ENCODE measurements at regions of chr7 and their contacts with region 1.

Region 1: DNA sequence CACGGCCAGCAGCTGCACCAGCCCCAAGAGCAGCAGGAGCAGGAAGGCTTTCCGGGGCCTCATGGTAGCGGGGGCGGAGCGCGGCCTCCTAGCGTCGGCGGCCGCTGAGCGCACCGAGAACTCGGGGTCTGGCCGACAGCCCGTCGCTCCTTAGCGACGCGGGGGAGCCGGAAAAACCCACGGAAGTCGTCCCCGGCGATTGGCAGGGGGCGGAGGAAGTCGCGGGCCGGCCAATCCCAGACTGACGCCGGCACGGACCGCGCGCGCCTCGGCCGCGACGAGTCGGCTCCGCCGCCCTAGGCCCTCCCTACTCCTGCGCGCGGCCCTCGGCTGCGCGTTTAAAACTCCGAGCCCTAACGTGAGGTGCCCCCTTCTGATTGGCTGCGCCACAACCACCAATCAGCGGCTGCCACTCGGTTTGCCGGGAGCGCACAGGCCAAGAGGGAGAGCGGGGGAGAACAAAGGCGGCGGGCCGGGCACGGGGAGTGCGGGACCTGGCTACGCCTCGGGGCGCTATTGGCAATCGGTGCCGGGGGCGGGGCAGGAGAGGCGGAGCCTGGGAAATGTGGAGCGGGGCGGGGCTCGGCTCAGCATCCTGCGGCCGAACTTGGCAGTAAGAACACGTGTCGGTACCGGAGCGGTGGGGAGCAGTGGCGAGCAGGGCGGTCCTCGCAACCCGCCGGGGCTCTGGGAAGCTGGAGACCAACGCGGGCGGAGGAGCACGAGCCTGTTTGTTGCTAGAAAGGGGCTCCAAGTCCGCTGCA is at the start of gene PDIA4:
- DNase-seq: peak; percentile 99
- H3K4me3 ChIP-seq: peak within 1 kb of the TSS; percentile 59 to 86
- H3K4me3 Mint-ChIP-seq: peak within 1 kb of the TSS; percentile 88 to 95 (median 92)
- H3K27ac ChIP-seq: peak within 1 kb of the TSS; percentile 88
- H3K27ac Mint-ChIP-seq: peak within 1 kb of the TSS; percentile 90 to 98 (median 94)
- H3K4me1 ChIP-seq: peaks cover 40% of the 10 kb centered on the region
- H3K4me1 Mint-ChIP-seq: peaks cover 29 to 58% (median 45%) of the 10 kb centered on the region in 4 donors
- H3K27me3 ChIP-seq: no peaks in the 10 kb centered on the region
- H3K27me3 Mint-ChIP-seq: no peaks in the 10 kb centered on the region
- total RNA-seq, gene PDIA4: 82.8 to 87.1 TPM

Region 2: GRCh38 chr7:148650232-148650858 is 378.2 kb before region 1 on chr7:
- CTCF ChIA-PET with region 1: no interaction called
- POLR2A ChIA-PET with region 1: no interaction called
- intact Hi-C with region 1: no loop called
- DNase-seq: no peak
- H3K4me3 ChIP-seq: no peak overlapping the region
- H3K4me3 Mint-ChIP-seq: no peak overlapping the region
- H3K27ac ChIP-seq: no peak overlapping the region
- H3K27ac Mint-ChIP-seq: no peak overlapping the region
- H3K4me1 ChIP-seq: no peaks in the 10 kb centered on the region
- H3K4me1 Mint-ChIP-seq: no peaks in the 10 kb centered on the region
- H3K27me3 ChIP-seq: no peaks in the 10 kb centered on the region
- H3K27me3 Mint-ChIP-seq: peaks cover 0 to 1% of the 10 kb centered on the region in 2 donors

Region 3: DNA sequence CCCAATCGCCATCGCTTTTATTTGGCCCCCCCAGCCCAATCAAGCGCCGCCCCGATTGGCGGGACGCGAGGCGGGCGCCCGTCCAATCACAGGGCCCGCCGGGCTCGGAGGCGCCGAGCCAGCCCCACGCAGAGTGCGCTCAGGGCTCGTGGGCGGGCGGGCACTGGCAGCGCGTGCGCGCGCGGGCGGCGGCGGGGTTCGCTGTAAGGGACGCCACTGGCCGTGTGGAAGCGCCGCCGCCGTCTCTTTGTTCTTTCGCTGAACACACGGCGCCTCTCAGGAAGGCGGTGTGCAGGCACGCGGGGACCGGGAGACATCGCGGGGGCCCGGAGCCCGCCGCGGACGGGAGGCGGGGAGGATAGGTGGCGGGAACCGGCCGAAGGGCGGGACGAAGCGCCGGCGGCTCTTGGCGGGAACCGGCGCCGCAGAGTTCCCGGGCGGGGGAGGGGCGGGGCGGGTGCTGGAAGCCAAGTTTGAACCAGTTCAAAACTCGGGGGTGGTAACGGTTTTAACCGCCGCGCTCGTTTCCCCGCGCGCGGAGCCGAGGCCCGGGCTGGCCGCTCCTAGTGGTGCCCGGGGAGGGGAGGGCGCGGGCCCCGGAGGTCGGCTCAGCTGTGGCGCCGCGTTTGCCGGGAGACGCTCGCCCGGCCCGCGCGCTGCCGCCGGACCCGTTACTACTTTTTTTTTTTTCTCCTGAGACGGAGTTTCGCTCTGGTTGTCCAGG is 144.1 kb before region 1 on chr7:
- CTCF ChIA-PET with region 1: no interaction called
- POLR2A ChIA-PET with region 1: no interaction called
- intact Hi-C with region 1: loop called (anchors 1 kb)
- DNase-seq: peak; percentile 91 to 96 (median 94)
- H3K4me3 ChIP-seq: peak overlapping the region in 1 of 2 donors; percentile 84
- H3K4me3 Mint-ChIP-seq: peak overlapping the region; percentile 90 to 97 (median 94)
- H3K27ac ChIP-seq: peak overlapping the region; percentile 79
- H3K27ac Mint-ChIP-seq: peak overlapping the region; percentile 89 to 96 (median 92)
- H3K4me1 ChIP-seq: peaks cover 31% of the 10 kb centered on the region
- H3K4me1 Mint-ChIP-seq: peaks cover 12 to 38% (median 24%) of the 10 kb centered on the region in 4 donors
- H3K27me3 ChIP-seq: no peaks in the 10 kb centered on the region
- H3K27me3 Mint-ChIP-seq: no peaks in the 10 kb centered on the region

Region 4: DNA sequence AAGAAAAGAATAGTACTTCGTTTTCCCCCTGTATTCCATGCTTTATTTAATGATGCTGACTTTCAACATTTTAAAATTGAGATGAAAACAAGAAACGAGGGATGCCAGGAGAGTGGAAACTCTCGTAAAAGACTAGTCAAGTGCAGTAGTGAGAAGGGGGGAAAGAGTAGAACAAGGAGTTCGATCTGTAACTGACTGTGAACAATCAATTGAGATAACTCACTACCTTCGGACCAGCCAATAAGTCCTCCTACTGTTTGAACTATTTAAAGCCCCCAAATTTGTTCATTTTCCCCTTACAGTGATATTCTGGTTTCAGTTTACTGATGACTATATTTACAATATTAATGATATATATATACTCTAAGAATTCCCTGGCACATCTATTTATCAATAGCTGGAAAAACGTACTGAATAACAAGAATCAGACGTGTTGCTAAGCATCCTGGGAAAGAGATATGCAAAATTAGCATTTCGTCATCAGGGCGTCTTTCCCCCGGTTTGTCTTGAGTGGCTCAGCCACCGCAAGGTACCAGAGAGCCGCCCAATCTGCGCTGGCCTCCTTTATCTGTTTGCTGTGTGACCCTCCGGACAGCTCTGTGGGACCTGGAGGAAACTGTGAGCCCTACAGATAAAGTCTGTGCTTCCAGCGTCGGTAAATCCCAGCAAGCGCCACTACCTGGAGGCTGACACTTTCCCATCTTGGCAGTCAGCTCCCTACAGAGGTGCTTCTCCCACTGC is 41.3 kb before region 1 on chr7:
- CTCF ChIA-PET with region 1: no interaction called
- POLR2A ChIA-PET with region 1: interaction called, 4 read pairs
- intact Hi-C with region 1: loop called (anchors 1 kb)
- DNase-seq: peak; percentile 89 to 91 (median 90)
- H3K4me3 ChIP-seq: peak overlapping the region; percentile 95 to 98
- H3K4me3 Mint-ChIP-seq: peak overlapping the region; percentile 93 to 99 (median 98)
- H3K27ac ChIP-seq: peak overlapping the region; percentile 83
- H3K27ac Mint-ChIP-seq: peak overlapping the region; percentile 96 to 100 (median 98)
- H3K4me1 ChIP-seq: peaks cover 46% of the 10 kb centered on the region
- H3K4me1 Mint-ChIP-seq: peaks cover 27 to 59% (median 45%) of the 10 kb centered on the region in 4 donors
- H3K27me3 ChIP-seq: no peaks in the 10 kb centered on the region
- H3K27me3 Mint-ChIP-seq: peaks cover 2 to 5% of the 10 kb centered on the region in 2 donors

Region 5: DNA sequence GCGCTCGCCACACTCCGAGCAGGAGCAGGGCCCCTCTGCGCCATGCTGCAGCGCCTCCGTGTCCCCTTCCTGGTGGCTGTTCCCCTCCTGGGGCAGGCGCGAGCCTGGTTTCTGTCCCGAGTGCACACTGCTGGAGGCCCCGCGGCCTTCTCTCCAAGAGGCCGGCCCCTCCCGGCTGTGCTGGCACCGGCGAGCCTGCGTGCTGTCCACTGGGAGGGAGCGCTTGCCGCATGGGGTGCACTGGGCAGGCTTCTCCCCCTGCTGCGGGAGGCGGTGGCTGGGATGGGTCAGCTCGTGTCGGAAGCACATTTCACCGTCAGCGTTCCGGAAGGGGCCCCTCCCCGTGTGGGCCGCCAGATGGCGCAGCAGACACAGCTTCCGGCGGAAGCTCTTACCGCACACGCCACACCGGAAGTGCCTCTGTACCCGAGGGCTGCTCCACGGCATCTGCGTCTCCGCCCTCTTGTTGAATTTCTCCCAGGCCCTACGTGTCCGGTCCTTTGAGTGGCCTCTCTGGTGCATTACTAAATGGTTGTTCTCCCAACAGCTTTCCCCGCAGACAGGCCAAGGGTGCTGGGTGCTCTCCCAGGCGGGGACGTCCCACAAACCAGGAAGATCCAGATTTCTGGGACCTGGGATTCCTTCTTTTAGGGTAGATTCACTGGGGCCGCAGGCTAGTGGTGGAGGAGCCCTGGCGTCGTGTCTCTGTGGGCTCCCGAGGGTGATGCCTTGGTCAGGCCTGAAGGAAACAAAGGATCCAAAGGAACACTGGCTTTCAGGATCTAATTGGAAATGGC is 43.3 kb after region 1 on chr7:
- CTCF ChIA-PET with region 1: interaction called, 11 read pairs
- POLR2A ChIA-PET with region 1: interaction called, 27 read pairs
- intact Hi-C with region 1: no loop called
- DNase-seq: peak in 4 of 5 donors; percentile 46 to 60 (median 55)
- H3K4me3 ChIP-seq: no peak overlapping the region
- H3K4me3 Mint-ChIP-seq: peak overlapping the region in 4 of 8 donors; percentile 8 to 55 (median 46)
- H3K27ac ChIP-seq: peak overlapping the region; percentile 31
- H3K27ac Mint-ChIP-seq: peak overlapping the region; percentile 36 to 83 (median 72)
- H3K4me1 ChIP-seq: peaks cover 4% of the 10 kb centered on the region
- H3K4me1 Mint-ChIP-seq: peaks cover 4 to 19% (median 6%) of the 10 kb centered on the region in 4 donors
- H3K27me3 ChIP-seq: no peaks in the 10 kb centered on the region
- H3K27me3 Mint-ChIP-seq: no peaks in the 10 kb centered on the region

Region 6: GRCh38 chr7:149147072-149147751 is 118.7 kb after region 1 on chr7 and contains the start of gene ZNF398:
- CTCF ChIA-PET with region 1: no interaction called
- POLR2A ChIA-PET with region 1: interaction called, 7 read pairs
- intact Hi-C with region 1: loop called (anchors 2 kb)
- DNase-seq: peak; percentile 83 to 89 (median 85)
- H3K4me3 ChIP-seq: peak within 1 kb of the TSS; percentile 71 to 74
- H3K4me3 Mint-ChIP-seq: peak within 1 kb of the TSS; percentile 85 to 95 (median 92)
- H3K27ac ChIP-seq: peak within 1 kb of the TSS; percentile 86
- H3K27ac Mint-ChIP-seq: peak within 1 kb of the TSS; percentile 87 to 97 (median 96)
- H3K4me1 ChIP-seq: peaks cover 35% of the 10 kb centered on the region
- H3K4me1 Mint-ChIP-seq: peaks cover 18 to 46% (median 32%) of the 10 kb centered on the region in 4 donors
- H3K27me3 ChIP-seq: no peaks in the 10 kb centered on the region
- H3K27me3 Mint-ChIP-seq: no peaks in the 10 kb centered on the region
- total RNA-seq, gene ZNF398: 26.9 to 28.4 TPM

Measured in CD4-positive, alpha-beta memory T cell (primary cell).